PC-9 (cell line): ENCODE measurements at regions of chr6 and their contacts with region 1.

Region 1: GRCh38 chr6:136685540-136686108 is 106.7 kb downstream of the MAP3K5 start:
- DNase-seq: peak; percentile 20 to 82
- H3K4me3 ChIP-seq: no peak overlapping the region
- H3K27ac ChIP-seq: peak overlapping the region; percentile 43
- H3K4me1 ChIP-seq: peaks cover 19% of the 10 kb centered on the region
- H3K27me3 ChIP-seq: no peaks in the 10 kb centered on the region
- CTCF ChIP-seq: no peak

Region 2: GRCh38 chr6:136696238-136696637 is 10.6 kb after region 1 on chr6:
- CTCF ChIA-PET with region 1: no interaction called
- POLR2A ChIA-PET with region 1: no interaction called
- intact Hi-C with region 1: loop called (anchors 2 kb)
- DNase-seq: no peak
- H3K4me3 ChIP-seq: no peak overlapping the region
- H3K27ac ChIP-seq: no peak overlapping the region
- H3K4me1 ChIP-seq: peaks cover 19% of the 10 kb centered on the region
- H3K27me3 ChIP-seq: no peaks in the 10 kb centered on the region
- CTCF ChIP-seq: no peak